ENCODE measurements at regions of chr1 and their contacts with region 1.

Region 1: GRCh38 chr1:205668951-205669340 is 11.4 kb downstream of the SLC45A3 start:
- DNase-seq: peak; percentile 79
- CTCF ChIP-seq: peak; percentile 28

Region 2: GRCh38 chr1:205141236-205142101 is 527.5 kb before region 1 on chr1:
- in situ Hi-C with region 1: no loop called
- DNase-seq: peak; percentile 69
- CTCF ChIP-seq: peak; percentile 70

Region 3: DNA sequence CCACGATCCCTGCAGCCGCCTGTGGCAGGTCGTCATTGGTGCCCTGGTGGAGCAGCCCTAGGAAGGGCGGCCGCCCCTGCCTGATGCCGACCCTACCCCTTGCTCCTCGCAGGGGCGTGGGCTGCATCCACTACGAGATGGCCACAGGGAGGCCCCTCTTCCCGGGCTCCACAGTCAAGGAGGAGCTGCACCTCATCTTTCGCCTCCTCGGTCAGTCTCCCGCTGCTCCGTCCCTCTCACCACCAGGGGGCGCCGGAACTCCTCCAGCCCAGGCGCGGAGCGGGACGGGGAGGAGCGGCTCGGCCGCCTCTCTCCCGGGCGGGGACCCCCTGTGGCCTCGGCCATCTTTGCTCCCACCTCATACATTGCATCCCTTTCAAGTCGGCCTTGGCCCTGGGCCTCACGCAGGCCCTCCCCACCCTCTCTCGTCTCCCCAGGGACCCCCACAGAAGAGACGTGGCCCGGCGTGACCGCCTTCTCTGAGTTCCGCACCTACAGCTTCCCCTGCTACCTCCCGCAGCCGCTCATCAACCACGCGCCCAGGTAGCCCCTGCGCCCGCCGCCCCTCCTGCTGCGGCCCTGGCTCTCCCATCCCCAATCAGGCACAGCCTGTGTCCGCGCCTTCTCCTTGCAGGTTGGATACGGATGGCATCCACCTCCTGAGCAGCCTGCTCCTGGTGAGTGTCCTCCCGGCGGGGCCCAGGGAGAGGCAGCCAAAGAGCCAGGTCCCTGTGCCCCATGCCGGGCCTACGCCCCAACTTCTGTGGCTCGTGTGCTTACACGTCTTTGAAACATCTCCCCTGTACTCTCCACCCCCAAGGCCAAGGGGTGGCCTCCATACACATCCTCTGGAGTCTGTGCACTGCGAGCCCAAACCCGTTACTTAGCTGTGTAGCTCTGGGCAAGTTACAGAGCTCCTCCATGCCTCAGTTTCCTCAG is 139.8 kb before region 1 on chr1:
- in situ Hi-C with region 1: loop called (anchors 10 kb)
- DNase-seq: peak; percentile 90
- CTCF ChIP-seq: peak; percentile 96

Region 4: GRCh38 chr1:205709059-205709398 is 40.1 kb after region 1 on chr1:
- in situ Hi-C with region 1: loop called (anchors 5 kb)
- DNase-seq: no peak
- CTCF ChIP-seq: no peak